Caco-2 (cell line): ENCODE measurements at regions of chr12 and their contacts with region 1.

Region 1: GRCh38 chr12:66693901-66694675 is 15.2 kb upstream of the GRIP1 start:
- DNase-seq: peak in 1 of 2 experiments; percentile 47
- H3K4me3 ChIP-seq: no peak overlapping the region
- H3K4me3 Mint-ChIP-seq: no peak overlapping the region
- H3K27ac Mint-ChIP-seq: no peak overlapping the region
- H3K4me1 ChIP-seq: no peaks in the 10 kb centered on the region
- H3K4me1 Mint-ChIP-seq: no peaks in the 10 kb centered on the region
- H3K27me3 ChIP-seq: no peaks in the 10 kb centered on the region
- H3K27me3 Mint-ChIP-seq: peaks cover 10% of the 10 kb centered on the region
- CTCF ChIP-seq: peak; percentile 43 to 50

Region 2: DNA sequence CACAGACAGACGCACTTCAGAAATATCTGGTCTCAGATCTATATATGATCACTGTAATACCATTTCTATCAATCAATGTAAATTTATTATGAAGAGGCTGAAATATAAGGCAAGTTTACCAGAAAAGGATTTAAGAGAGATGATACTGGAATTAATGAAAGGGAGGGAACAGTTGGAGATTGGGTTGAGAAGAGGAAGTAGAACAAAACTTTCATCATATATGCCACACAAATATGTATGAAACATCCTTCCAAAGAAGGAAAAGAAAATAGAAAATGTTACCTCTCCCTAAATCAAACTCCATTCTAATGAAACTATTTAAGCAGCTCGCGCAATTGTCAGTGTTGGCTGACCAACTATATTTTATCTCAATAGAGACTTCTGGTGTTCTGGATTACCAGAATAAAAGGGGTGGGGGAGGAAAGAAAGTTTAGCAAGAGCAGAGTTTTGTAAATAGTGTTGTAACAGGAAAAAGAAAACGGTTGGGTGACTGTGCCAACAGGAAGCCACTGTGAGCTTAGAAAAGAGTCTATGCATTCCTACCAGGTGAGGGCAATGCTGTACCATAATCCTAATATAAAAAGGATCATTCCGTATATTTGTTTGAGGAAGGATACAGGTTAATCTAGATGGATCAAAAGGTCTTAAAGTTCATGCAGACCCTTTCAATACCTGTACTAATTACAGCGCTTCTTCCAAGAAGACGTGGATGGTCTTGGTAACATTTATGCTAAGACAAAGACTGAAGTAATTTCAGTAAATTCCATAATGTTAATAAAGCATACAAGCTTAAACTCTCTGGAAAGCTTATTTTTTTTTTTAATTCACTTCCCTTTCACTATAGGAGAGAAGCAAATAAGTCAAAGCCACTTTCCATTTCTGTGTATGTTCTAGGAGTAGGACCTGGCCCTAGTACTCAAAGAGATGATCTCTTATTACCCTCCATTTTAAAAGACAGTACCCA is 549.0 kb before region 1 on chr12:
- CTCF ChIA-PET with region 1: no interaction called
- POLR2A ChIA-PET with region 1: no interaction called
- intact Hi-C with region 1: loop called (anchors 10 kb)
- DNase-seq: peak in 1 of 2 experiments; percentile 60
- H3K4me3 ChIP-seq: no peak overlapping the region
- H3K4me3 Mint-ChIP-seq: no peak overlapping the region
- H3K27ac Mint-ChIP-seq: no peak overlapping the region
- H3K4me1 ChIP-seq: 0 out of 2 replicates have a peak, but pooled peaks cover 4% of the 10 kb centered on the region
- H3K4me1 Mint-ChIP-seq: no peaks in the 10 kb centered on the region
- H3K27me3 ChIP-seq: no peaks in the 10 kb centered on the region
- H3K27me3 Mint-ChIP-seq: no peaks in the 10 kb centered on the region
- CTCF ChIP-seq: peak; percentile 60 to 61

Region 3: GRCh38 chr12:66636771-66637170 is 57.3 kb before region 1 on chr12:
- CTCF ChIA-PET with region 1: no interaction called
- POLR2A ChIA-PET with region 1: no interaction called
- intact Hi-C with region 1: no loop called
- DNase-seq: peak in 1 of 2 experiments; percentile 34
- H3K4me3 ChIP-seq: no peak overlapping the region
- H3K4me3 Mint-ChIP-seq: no peak overlapping the region
- H3K27ac Mint-ChIP-seq: no peak overlapping the region
- H3K4me1 ChIP-seq: no peaks in the 10 kb centered on the region
- H3K4me1 Mint-ChIP-seq: no peaks in the 10 kb centered on the region
- H3K27me3 ChIP-seq: no peaks in the 10 kb centered on the region
- H3K27me3 Mint-ChIP-seq: no peaks in the 10 kb centered on the region
- CTCF ChIP-seq: no peak